ENCODE measurements at regions of chr9 and their contacts with region 1.

Region 1: GRCh38 chr9:73183917-73184861 is 32.5 kb downstream of the ANXA1 start:
- DNase-seq: no peak
- H3K4me3 Mint-ChIP-seq: no peak overlapping the region
- H3K27ac Mint-ChIP-seq: no peak overlapping the region
- H3K4me1 Mint-ChIP-seq: peaks cover 8% of the 10 kb centered on the region
- H3K27me3 Mint-ChIP-seq: no peaks in the 10 kb centered on the region
- CTCF ChIP-seq: no peak

Region 2: GRCh38 chr9:72871685-72872084 is 312.5 kb before region 1 on chr9:
- CTCF ChIA-PET with region 1: no interaction called
- intact Hi-C with region 1: loop called (anchors 5 kb)
- DNase-seq: peak; percentile 1
- H3K4me3 Mint-ChIP-seq: no peak overlapping the region
- H3K27ac Mint-ChIP-seq: no peak overlapping the region
- H3K4me1 Mint-ChIP-seq: peaks cover 6% of the 10 kb centered on the region
- H3K27me3 Mint-ChIP-seq: no peaks in the 10 kb centered on the region
- CTCF ChIP-seq: peak; percentile 51

Region 3: DNA sequence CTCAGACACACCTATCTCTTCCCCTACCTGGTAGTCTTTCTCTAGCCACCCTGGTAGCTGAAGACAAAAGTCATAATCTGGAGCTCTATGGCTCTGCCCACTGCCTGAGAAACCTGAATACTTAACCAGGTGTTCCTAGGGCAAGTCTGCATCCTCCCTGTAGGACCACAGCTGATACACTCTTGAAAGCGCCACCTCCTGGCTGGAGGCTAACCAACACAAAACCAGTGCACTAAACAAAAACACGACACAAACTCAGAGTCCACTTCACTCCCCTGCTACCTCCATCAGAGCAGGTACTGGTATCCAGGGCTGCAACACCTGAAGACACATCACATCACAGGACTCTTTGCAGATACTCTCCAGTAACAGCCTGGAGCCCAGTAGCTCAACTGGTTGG is 117.1 kb before region 1 on chr9:
- CTCF ChIA-PET with region 1: no interaction called
- intact Hi-C with region 1: no loop called
- DNase-seq: no peak
- H3K4me3 Mint-ChIP-seq: no peak overlapping the region
- H3K27ac Mint-ChIP-seq: no peak overlapping the region
- H3K4me1 Mint-ChIP-seq: no peaks in the 10 kb centered on the region
- H3K27me3 Mint-ChIP-seq: no peaks in the 10 kb centered on the region
- CTCF ChIP-seq: no peak

Region 4: DNA sequence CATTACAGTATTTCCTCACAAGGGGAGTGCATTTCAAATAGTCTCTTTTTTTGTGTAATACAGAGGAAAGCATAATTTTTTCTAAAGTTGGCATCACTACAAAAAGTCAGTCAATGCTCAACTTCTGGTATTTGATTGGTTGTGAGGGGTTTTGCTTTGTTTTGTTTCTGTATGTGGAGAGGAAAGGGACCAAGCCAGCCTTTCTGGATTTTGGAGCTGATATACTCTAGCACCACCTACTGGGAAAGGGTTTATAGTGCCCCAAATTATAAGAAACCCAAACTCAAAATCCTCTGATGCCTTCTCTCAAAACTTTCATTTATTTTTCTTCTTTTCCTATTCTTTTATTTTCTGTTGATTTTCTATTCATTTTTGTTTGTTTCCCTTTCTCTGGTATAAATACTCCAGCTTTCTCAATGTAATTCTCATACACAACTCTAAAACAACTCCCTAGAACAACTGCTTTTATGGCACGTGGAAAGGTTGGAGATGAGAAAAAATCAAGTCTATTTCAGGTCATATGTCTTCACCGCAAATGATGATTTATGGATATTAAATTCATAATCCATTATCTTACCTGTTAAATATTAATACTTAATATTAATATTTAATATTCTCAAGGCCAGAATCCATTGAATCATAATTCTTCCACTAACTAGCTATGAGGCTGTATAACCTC is 102.1 kb before region 1 on chr9:
- CTCF ChIA-PET with region 1: no interaction called
- intact Hi-C with region 1: loop called (anchors 5 kb)
- DNase-seq: peak; percentile 23
- H3K4me3 Mint-ChIP-seq: no peak overlapping the region
- H3K27ac Mint-ChIP-seq: no peak overlapping the region
- H3K4me1 Mint-ChIP-seq: peaks cover 26% of the 10 kb centered on the region
- H3K27me3 Mint-ChIP-seq: no peaks in the 10 kb centered on the region
- CTCF ChIP-seq: no peak

Region 5: GRCh38 chr9:73114058-73114457 is 70.1 kb before region 1 on chr9:
- CTCF ChIA-PET with region 1: no interaction called
- intact Hi-C with region 1: loop called (anchors 2 kb)
- DNase-seq: no peak
- H3K4me3 Mint-ChIP-seq: no peak overlapping the region
- H3K27ac Mint-ChIP-seq: no peak overlapping the region
- H3K4me1 Mint-ChIP-seq: peaks cover 17% of the 10 kb centered on the region
- H3K27me3 Mint-ChIP-seq: no peaks in the 10 kb centered on the region
- CTCF ChIP-seq: no peak

Measured in Calu3 (cell line).